GM23248 (cell line): ENCODE measurements at regions of chr17 and their contacts with region 1.

Region 1: GRCh38 chr17:63419949-63420867 is 25.9 kb downstream of the CYB561 start:
- DNase-seq: no peak
- H3K4me3 ChIP-seq: no peak overlapping the region
- H3K27ac ChIP-seq: no peak overlapping the region
- H3K4me1 ChIP-seq: no peaks in the 10 kb centered on the region
- H3K27me3 ChIP-seq: no peaks in the 10 kb centered on the region

Region 2: DNA sequence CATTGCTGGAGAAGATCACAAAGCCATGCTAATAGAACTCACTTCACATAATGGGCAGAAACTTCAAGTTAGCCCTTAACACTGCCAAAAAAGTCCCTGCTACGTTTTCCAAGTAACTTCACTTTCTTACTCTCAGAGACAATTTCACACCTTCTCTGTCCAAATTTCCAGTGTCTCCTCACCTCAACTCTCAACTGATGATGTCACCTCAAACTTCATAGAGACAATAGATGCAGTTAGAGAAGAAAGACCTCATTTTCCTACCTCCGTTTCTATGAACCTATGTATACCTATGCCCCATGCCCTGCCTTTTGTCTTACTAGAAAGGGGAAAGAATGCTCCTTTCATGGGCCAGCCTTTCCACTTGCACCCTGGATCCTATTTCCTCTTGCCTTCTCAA is 1054.0 kb before region 1 on chr17:
- in situ Hi-C with region 1: no loop called
- DNase-seq: no peak
- H3K4me3 ChIP-seq: no peak overlapping the region
- H3K27ac ChIP-seq: no peak overlapping the region
- H3K4me1 ChIP-seq: no peaks in the 10 kb centered on the region
- H3K27me3 ChIP-seq: no peaks in the 10 kb centered on the region; the same call in 1 of the 2 replicates

Region 3: DNA sequence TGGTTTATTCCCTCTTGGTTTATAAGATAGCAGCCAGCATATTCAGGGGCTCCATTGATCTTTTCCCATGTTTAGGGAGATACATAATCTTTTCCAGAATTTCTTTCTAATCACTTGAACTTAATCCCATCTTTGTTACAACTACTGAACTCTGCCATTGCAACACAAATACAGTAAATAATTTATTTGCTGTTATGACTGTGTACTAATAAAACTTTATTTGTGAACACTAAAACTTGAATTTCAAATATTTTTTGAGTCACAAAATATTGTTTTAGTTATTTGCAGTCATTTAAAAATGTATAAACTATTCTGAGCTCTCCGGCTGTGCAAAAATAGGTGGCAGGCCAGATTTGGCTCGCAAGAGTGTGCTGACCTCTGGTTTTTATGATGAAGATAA is 367.6 kb before region 1 on chr17:
- in situ Hi-C with region 1: no loop called
- DNase-seq: no peak
- H3K4me3 ChIP-seq: no peak overlapping the region
- H3K27ac ChIP-seq: no peak overlapping the region
- H3K4me1 ChIP-seq: no peaks in the 10 kb centered on the region
- H3K27me3 ChIP-seq: no peaks in the 10 kb centered on the region

Region 4: DNA sequence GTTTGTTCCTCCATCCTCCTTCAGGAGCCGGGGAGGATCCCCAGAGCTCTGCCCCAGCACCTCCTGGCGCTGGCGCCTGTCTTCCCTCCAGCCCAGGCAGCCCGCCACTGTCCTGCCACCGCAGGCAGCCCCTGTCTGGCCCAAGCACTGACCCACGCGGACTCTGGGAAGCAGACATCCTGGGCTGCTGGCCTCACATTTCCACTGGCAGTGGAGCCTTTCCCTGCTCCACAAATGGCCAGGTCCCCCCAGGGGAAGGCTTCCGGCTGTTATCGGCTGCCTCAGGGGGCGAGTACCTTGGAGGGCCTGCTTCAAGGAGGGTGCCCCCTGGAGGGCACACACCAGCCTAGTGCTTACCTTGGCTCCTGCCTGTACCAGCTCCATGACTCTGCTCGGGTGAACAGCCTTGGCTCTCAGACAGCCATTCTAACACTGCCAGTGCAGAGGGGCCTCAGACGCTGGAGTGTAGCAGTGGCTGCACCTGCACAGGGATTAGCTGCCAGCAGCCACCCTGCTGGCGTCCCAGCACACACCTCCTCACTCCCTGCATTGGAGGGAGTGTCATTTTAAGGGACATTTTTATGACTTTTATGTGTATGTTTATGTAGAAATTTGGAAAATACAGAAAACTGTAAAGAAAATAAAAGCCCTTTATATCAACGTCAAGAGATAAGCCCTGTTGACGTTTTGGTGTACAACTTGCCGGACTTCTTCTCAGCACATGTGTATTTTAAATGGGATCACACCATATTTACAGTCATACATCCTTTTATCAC is 77.7 kb after region 1 on chr17:
- in situ Hi-C with region 1: no loop called
- DNase-seq: no peak
- H3K4me3 ChIP-seq: no peak overlapping the region
- H3K27ac ChIP-seq: no peak overlapping the region
- H3K4me1 ChIP-seq: peaks cover 11% of the 10 kb centered on the region
- H3K27me3 ChIP-seq: peaks cover 6% of the 10 kb centered on the region

Region 5: GRCh38 chr17:63621766-63622519 is 201.7 kb after region 1 on chr17 and contains the start of gene MAP3K3:
- in situ Hi-C with region 1: loop called (anchors 5 kb)
- DNase-seq: peak; percentile 100
- H3K4me3 ChIP-seq: peak within 1 kb of the TSS; percentile 99
- H3K27ac ChIP-seq: peak within 1 kb of the TSS; percentile 54
- H3K4me1 ChIP-seq: peaks cover 31% of the 10 kb centered on the region
- H3K27me3 ChIP-seq: no peaks in the 10 kb centered on the region
- total RNA-seq, gene MAP3K3: 36.7 and 49.3 TPM in 2 replicates